ENCODE measurements at regions of chr17 and their contacts with region 1.

Region 1: GRCh38 chr17:78082988-78083387 is 45.6 kb downstream of the TMC6 start:
- DNase-seq: no peak
- ATAC-seq: no peak
- H3K4me3 ChIP-seq: no peak overlapping the region
- H3K27ac ChIP-seq: no peak overlapping the region
- H3K4me1 ChIP-seq: no peaks in the 10 kb centered on the region
- CTCF ChIP-seq: no peak
- EP300 ChIP-seq: no peak
- POLR2A ChIP-seq: no peak
- RAD21 ChIP-seq: no peak

Region 2: GRCh38 chr17:78072961-78073360 is 10.0 kb before region 1 on chr17:
- CTCF ChIA-PET with region 1: interaction called, 13 read pairs
- POLR2A ChIA-PET with region 1: no interaction called
- DNase-seq: no peak
- ATAC-seq: no peak
- H3K4me3 ChIP-seq: no peak overlapping the region
- H3K27ac ChIP-seq: no peak overlapping the region
- H3K4me1 ChIP-seq: no peaks in the 10 kb centered on the region
- CTCF ChIP-seq: no peak
- EP300 ChIP-seq: no peak
- POLR2A ChIP-seq: no peak
- RAD21 ChIP-seq: no peak

Region 3: GRCh38 chr17:78107457-78107856 is 24.5 kb after region 1 on chr17:
- CTCF ChIA-PET with region 1: interaction called, 12 read pairs
- POLR2A ChIA-PET with region 1: no interaction called
- DNase-seq: no peak
- ATAC-seq: no peak
- H3K4me3 ChIP-seq: no peak overlapping the region
- H3K27ac ChIP-seq: no peak overlapping the region
- H3K4me1 ChIP-seq: no peaks in the 10 kb centered on the region
- CTCF ChIP-seq: no peak
- EP300 ChIP-seq: no peak
- POLR2A ChIP-seq: no peak
- RAD21 ChIP-seq: no peak